ENCODE measurements at regions of chr6 and their contacts with region 1.

Region 1: DNA sequence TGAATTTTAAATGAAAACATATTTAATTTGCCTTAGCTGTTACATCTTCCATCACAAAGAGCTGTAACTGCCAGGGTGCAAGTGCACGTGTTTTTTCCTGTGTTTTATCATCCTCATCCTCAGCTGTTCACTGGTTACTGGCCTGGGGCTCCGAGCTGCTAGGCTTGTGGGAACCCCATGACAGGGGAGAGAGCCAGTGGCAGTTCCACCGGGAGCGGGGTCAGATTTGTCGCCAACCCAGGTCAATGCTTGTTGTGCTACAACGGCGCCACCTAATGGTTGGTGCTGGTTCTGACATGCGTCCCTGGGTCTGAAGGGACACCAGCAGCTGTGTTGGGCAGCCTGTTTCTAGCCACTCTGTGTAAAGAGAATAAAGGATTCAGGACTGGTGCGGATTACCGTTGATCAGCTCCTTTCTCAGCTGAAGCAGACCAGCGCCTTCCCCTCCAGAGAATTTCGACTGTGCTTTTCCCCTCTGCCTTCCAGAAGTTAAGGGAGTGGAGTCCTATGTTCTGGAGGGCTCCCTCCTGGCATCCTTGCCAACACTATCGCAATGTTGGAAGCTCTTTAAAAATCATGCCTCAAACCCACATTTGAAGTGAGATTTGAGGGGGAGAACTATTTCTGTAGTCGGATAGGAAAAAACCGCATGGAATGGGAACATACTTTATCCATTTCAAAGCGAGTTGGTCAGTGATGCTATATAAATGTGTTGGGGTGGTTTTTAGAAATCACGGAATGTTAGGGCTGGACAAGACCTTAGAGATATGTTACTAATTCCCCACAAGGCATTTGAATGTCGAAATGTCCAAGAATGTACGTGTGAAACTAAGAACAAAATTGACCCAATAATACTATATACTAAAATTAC is 32.1 kb downstream of the SUMO4 start:
- DNase-seq: peak; percentile 97
- H3K4me3 Mint-ChIP-seq: no peak overlapping the region
- H3K27ac Mint-ChIP-seq: no peak overlapping the region
- H3K4me1 Mint-ChIP-seq: peaks cover 2% of the 10 kb centered on the region
- H3K27me3 Mint-ChIP-seq: no peaks in the 10 kb centered on the region

Region 2: DNA sequence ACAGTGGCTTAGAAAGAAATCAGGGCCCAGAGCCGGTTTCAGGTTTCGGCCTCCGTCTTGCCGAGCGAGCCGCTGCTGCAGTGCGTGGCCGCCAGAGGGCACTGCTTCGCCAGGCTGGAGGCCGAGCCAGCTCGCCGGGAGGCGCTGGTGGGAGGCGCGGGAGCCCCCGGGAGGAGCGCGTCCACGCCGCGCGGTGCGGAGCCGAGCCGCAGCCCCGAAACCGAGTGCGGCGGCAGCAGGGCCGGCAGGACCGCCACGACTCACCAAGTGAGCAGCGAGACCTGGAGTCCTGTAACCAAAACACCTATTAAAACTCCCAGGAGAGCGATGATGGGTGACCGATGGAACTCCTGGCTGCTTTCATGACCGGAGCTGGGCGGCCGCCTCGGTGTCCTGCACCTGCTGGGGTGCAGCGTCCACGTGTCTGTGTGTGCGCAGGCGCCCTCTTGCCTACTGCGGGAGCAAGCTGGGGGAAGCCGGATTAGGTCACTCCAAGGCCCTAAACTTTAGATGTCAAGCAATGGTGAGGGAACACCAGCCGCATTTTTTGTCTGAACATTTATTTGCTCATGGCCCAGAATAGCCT is 872.2 kb before region 1 on chr6:
- CTCF ChIA-PET with region 1: interaction called, 4 read pairs
- intact Hi-C with region 1: loop called (anchors 5 kb)
- DNase-seq: peak; percentile 64
- H3K4me3 Mint-ChIP-seq: no peak overlapping the region
- H3K27ac Mint-ChIP-seq: no peak overlapping the region
- H3K4me1 Mint-ChIP-seq: peaks cover 4% of the 10 kb centered on the region
- H3K27me3 Mint-ChIP-seq: peaks cover 18% of the 10 kb centered on the region

Region 3: DNA sequence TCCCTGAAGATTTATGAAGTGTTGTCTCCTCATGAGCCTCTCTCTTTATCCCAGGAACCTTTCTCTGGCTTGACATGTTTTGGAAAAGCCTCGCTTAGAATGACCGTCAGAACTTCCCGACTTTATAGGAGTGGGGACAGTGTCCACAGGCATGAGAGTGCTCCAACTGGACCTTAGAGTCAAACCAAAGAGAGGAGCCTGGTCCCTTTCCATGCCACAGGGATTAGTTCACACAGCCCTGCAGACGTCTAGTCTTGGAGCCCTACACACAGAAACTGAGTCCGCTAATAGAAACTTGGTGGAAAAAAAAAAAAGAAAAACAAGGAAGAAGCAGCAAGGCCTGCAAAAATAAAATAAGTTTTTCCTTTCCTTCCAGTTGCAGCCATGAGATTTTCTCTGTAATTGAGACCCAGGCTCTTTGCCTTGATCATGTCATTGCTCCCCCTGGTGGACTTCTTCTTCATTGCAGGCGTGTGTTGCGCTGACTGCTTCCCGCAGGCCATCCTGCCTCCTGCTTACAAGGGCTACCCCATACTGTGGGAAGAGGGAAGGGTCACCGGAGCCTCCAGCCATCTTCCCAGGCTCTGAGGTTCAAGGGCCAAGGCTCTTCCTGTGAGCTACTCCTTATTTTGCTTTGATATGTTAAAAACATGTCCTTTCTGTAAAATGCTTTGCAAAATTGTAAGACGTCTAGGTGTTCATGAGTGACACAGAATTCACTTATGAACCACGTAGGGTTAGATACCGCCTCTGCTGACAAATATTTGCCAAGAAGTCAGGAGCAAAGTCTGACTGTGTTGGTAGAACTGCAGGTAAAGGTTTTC is 484.3 kb before region 1 on chr6:
- CTCF ChIA-PET with region 1: no interaction called
- intact Hi-C with region 1: loop called (anchors 2 kb)
- DNase-seq: peak; percentile 89
- H3K4me3 Mint-ChIP-seq: no peak overlapping the region
- H3K27ac Mint-ChIP-seq: no peak overlapping the region
- H3K4me1 Mint-ChIP-seq: no peaks in the 10 kb centered on the region
- H3K27me3 Mint-ChIP-seq: peaks cover 2% of the 10 kb centered on the region

Region 4: DNA sequence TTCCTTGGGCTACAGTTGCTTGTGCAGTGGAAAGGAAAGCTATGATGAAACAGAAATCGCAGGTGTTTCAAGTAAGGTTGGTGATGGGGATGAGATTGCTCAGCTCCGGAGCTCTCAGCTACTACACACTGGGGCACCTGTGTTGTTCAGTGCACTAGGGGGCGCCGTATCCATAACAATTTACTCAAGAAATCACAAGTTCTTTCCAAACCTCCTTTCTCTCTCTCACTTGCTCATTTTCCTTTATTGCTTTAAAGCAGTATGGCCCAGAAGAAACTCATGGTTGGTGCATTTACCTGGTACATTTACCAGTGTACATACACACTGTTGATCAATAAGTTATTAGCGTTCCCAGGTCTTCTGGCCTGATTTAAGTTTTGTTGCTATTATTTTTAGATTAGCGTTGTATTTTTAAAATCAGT is 349.8 kb before region 1 on chr6:
- CTCF ChIA-PET with region 1: interaction called, 81 read pairs
- intact Hi-C with region 1: loop called (anchors 1 kb)
- DNase-seq: peak; percentile 97
- H3K4me3 Mint-ChIP-seq: no peak overlapping the region
- H3K27ac Mint-ChIP-seq: peak overlapping the region; percentile 41
- H3K4me1 Mint-ChIP-seq: peaks cover 54% of the 10 kb centered on the region
- H3K27me3 Mint-ChIP-seq: no peaks in the 10 kb centered on the region

Region 5: DNA sequence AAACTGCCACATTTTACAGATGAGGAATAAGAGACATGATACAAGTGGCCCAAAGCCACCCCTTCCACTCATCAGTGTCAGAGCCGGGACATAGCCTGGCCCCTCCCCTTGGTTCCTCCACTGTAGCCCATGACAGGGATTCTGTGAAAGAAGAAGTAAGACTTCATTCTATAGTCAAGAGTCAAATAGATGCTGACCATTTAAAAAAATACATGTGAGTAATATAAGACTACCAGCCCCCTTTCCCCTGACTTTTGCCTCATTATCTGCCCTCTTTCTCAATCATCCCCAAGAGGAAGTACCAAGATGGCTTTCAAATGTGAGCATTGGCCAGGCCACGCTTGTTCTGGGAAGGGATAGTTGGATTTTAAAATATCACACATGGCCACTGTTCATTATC is 172.4 kb before region 1 on chr6:
- CTCF ChIA-PET with region 1: interaction called, 4 read pairs
- intact Hi-C with region 1: loop called (anchors 5 kb)
- DNase-seq: no peak
- H3K4me3 Mint-ChIP-seq: no peak overlapping the region
- H3K27ac Mint-ChIP-seq: no peak overlapping the region
- H3K4me1 Mint-ChIP-seq: peaks cover 21% of the 10 kb centered on the region
- H3K27me3 Mint-ChIP-seq: no peaks in the 10 kb centered on the region

Region 6: DNA sequence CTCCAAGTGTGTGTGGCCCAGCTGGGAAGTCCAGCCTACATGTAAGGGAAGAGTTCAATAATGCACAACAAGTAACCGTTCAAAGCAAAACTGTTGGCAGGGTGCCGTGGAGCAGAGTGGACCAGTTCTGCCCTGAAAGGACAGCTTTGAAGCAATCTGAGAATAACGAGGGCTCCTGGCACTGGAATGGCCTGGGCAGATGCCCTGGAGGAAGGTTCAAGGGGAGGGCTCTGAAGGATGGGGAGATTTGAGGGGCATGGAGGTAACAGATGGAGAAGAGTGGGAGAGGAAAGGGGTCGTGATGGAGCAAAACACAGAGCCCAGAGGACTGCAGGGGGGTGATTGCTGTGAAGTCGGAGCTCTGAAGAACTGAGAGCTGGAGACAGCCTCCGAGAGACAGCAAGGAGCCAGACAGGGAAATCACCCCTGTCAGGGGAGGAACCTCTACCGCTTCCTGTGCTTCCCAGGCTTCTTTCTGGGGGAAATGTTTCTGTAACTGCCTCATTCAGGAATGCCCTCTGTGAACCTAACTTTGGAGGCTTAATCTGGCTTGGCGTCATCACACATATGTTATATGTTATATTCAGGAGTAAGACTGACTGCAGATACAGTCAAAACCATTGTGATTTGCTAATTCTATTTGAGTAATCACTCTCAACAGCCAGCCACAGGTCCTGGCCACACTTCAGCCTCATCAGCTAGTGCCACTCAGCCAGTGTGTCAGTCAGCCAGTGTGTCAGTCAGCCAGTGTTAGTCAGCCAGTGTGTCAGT is 11.5 kb after region 1 on chr6:
- CTCF ChIA-PET with region 1: interaction called, 22 read pairs
- intact Hi-C with region 1: no loop called
- DNase-seq: no peak
- H3K4me3 Mint-ChIP-seq: no peak overlapping the region
- H3K27ac Mint-ChIP-seq: no peak overlapping the region
- H3K4me1 Mint-ChIP-seq: peaks cover 9% of the 10 kb centered on the region
- H3K27me3 Mint-ChIP-seq: no peaks in the 10 kb centered on the region

Region 7: GRCh38 chr6:149488815-149489214 is 56.7 kb after region 1 on chr6:
- CTCF ChIA-PET with region 1: no interaction called
- intact Hi-C with region 1: no loop called
- DNase-seq: peak; percentile 80
- H3K4me3 Mint-ChIP-seq: no peak overlapping the region
- H3K27ac Mint-ChIP-seq: peak overlapping the region; percentile 65
- H3K4me1 Mint-ChIP-seq: peaks cover 68% of the 10 kb centered on the region
- H3K27me3 Mint-ChIP-seq: no peaks in the 10 kb centered on the region

Region 8: GRCh38 chr6:150046943-150047342 is 614.8 kb after region 1 on chr6:
- CTCF ChIA-PET with region 1: no interaction called
- intact Hi-C with region 1: no loop called
- DNase-seq: no peak
- H3K4me3 Mint-ChIP-seq: no peak overlapping the region
- H3K27ac Mint-ChIP-seq: no peak overlapping the region
- H3K4me1 Mint-ChIP-seq: no peaks in the 10 kb centered on the region
- H3K27me3 Mint-ChIP-seq: peaks cover 35% of the 10 kb centered on the region